ENCODE measurements at regions of chr4 and their contacts with region 1.

Region 1: DNA sequence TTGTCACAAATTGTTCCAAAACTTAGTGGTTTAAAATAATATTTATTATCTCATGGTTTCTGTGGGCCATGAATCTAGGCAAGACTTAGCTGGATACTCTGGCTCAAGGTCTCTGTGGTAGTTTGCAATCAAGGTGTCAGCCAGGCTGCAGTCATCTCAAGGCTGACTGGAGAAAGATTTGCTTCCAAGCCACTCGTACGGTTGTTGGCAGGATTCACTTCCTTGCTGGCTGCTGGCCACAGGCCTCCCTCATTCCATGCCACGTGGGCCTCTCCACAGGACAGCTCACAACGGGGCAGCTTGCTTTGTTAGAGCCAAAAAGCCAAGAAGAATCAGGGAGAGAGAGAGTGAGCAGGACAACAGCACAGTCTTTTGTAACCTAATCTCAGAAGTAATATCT is 101.4 kb downstream of the WWC2 start:
- DNase-seq: peak; percentile 84
- H3K4me3 ChIP-seq: no peak overlapping the region
- H3K27ac ChIP-seq: peak overlapping the region; percentile 15
- H3K4me1 ChIP-seq: peaks cover 24% of the 10 kb centered on the region
- H3K27me3 ChIP-seq: no peaks in the 10 kb centered on the region
- CTCF ChIP-seq: no peak

Region 2: GRCh38 chr4:183182873-183183725 is 17.4 kb before region 1 on chr4:
- CTCF ChIA-PET with region 1: no interaction called
- dilution Hi-C with region 1: no loop called
- in situ Hi-C with region 1: no loop called
- intact Hi-C with region 1: loop called (anchors 2 kb)
- DNase-seq: peak; percentile 83
- H3K4me3 ChIP-seq: no peak overlapping the region
- H3K27ac ChIP-seq: no peak overlapping the region
- H3K4me1 ChIP-seq: peaks cover 9% of the 10 kb centered on the region
- H3K27me3 ChIP-seq: no peaks in the 10 kb centered on the region
- CTCF ChIP-seq: no peak

Measured in mammary epithelial cell (primary cell).